ENCODE measurements at regions of chr4 and their contacts with region 1.

Region 1: GRCh38 chr4:10018818-10019461 is 2.4 kb downstream of the SLC2A9 start:
- DNase-seq: peak; percentile 92 to 96 (median 95)
- ATAC-seq: peak; percentile 99
- H3K4me3 ChIP-seq: peak overlapping the region; percentile 75
- H3K4me3 Mint-ChIP-seq: peak overlapping the region; percentile 83 to 96 (median 90)
- H3K27ac ChIP-seq: peak overlapping the region; percentile 81
- H3K27ac Mint-ChIP-seq: peak overlapping the region; percentile 82 to 98 (median 97)
- H3K4me1 ChIP-seq: peaks cover 6 to 10% of the 10 kb centered on the region in 2 donors
- H3K4me1 Mint-ChIP-seq: peaks cover 8 to 25% (median 13%) of the 10 kb centered on the region in 7 donors
- H3K27me3 ChIP-seq: no peaks in the 10 kb centered on the region
- H3K27me3 Mint-ChIP-seq: peaks cover 0 to under 1% (median 0%) of the 10 kb centered on the region in 5 donors

Region 2: GRCh38 chr4:9691238-9692065 is 327.5 kb before region 1 on chr4:
- CTCF ChIA-PET with region 1: no interaction called
- POLR2A ChIA-PET with region 1: no interaction called
- intact Hi-C with region 1: loop called (anchors 1 kb)
- DNase-seq: peak; percentile 80 to 88 (median 86)
- ATAC-seq: peak; percentile 100
- H3K4me3 ChIP-seq: peak overlapping the region; percentile 61
- H3K4me3 Mint-ChIP-seq: peak overlapping the region; percentile 65 to 92 (median 86)
- H3K27ac ChIP-seq: peak overlapping the region; percentile 77
- H3K27ac Mint-ChIP-seq: peak overlapping the region; percentile 79 to 91 (median 83)
- H3K4me1 ChIP-seq: no peaks in the 10 kb centered on the region
- H3K4me1 Mint-ChIP-seq: peaks cover 9 to 26% (median 24%) of the 10 kb centered on the region in 7 donors
- H3K27me3 ChIP-seq: no peaks in the 10 kb centered on the region
- H3K27me3 Mint-ChIP-seq: peaks cover 0 to 9% (median 0%) of the 10 kb centered on the region in 5 donors

Region 3: DNA sequence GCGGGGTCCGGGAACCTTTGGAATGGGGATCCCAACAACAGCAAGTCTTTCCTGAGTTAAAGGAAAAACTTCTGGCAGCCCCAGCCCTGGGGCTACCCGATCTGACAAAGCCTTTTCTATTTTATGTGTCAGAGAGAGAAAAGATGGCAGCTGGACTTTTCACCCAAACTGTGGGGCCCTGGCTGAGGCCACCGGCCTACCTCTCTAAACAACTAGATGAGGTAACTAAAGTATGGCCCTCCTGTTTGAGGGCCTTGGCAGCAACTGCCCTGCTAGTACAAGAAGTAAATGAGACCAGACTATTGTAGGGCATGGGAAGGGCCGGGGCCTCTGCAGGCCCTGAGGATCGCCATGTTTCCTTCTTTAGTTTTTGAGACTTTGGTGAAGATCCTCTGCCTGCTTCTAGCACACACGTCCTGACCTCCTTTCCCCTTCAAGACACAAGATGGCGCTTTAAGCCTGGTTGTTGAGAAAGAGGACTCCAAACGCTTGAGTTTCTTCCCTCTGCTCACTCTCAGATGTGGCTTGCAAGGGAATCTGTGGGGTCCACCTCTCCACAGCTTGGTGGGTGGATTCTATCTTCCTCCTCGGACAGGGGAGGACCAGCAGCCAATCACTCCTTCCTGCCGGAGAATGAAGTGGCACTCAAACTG is 256.0 kb before region 1 on chr4:
- CTCF ChIA-PET with region 1: interaction called, 3 read pairs
- POLR2A ChIA-PET with region 1: no interaction called
- intact Hi-C with region 1: loop called (anchors 1 kb)
- DNase-seq: peak in 8 of 9 donors; percentile 5 to 56 (median 34)
- ATAC-seq: no peak
- H3K4me3 ChIP-seq: no peak overlapping the region
- H3K4me3 Mint-ChIP-seq: no peak overlapping the region
- H3K27ac ChIP-seq: no peak overlapping the region
- H3K27ac Mint-ChIP-seq: no peak overlapping the region
- H3K4me1 ChIP-seq: no peaks in the 10 kb centered on the region
- H3K4me1 Mint-ChIP-seq: no peaks in the 10 kb centered on the region
- H3K27me3 ChIP-seq: no peaks in the 10 kb centered on the region
- H3K27me3 Mint-ChIP-seq: peaks cover 11 to 35% (median 26%) of the 10 kb centered on the region in 5 donors

Region 4: DNA sequence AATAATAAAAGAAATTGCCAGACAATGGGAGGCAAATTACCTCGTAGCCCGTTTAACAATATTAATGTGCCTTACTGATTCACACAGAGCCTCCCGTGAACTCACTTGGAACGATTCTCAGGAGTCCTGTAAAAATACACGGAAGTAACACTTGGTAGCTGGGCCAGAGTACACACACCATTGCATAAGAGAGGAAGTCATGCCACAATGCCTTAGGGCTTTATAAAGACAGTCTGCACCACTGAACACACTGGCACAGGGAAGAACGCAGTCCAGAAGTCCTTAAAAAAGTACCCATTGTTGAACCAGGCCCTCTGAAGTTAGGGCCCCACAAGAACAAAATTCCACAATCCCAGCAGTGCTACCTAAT is 12.7 kb before region 1 on chr4:
- CTCF ChIA-PET with region 1: no interaction called
- POLR2A ChIA-PET with region 1: no interaction called
- intact Hi-C with region 1: no loop called
- DNase-seq: no peak
- ATAC-seq: peak; percentile 82
- H3K4me3 ChIP-seq: no peak overlapping the region
- H3K4me3 Mint-ChIP-seq: no peak overlapping the region
- H3K27ac ChIP-seq: no peak overlapping the region
- H3K27ac Mint-ChIP-seq: no peak overlapping the region
- H3K4me1 ChIP-seq: no peaks in the 10 kb centered on the region
- H3K4me1 Mint-ChIP-seq: peaks cover 0 to 45% (median 0%) of the 10 kb centered on the region in 7 donors
- H3K27me3 ChIP-seq: no peaks in the 10 kb centered on the region
- H3K27me3 Mint-ChIP-seq: no peaks in the 10 kb centered on the region

Region 5: GRCh38 chr4:10074767-10075105 is 55.8 kb after region 1 on chr4:
- CTCF ChIA-PET with region 1: no interaction called
- POLR2A ChIA-PET with region 1: no interaction called
- intact Hi-C with region 1: loop called in 1 of 2 experiments (anchors 5 kb)
- DNase-seq: no peak
- ATAC-seq: peak; percentile 37
- H3K4me3 ChIP-seq: no peak overlapping the region
- H3K4me3 Mint-ChIP-seq: no peak overlapping the region
- H3K27ac ChIP-seq: no peak overlapping the region
- H3K27ac Mint-ChIP-seq: peak overlapping the region in 5 of 9 donors; percentile 13 to 74 (median 33)
- H3K4me1 ChIP-seq: peaks cover 0 to 2% of the 10 kb centered on the region in 2 donors
- H3K4me1 Mint-ChIP-seq: peaks cover 0 to 8% (median 0%) of the 10 kb centered on the region in 7 donors
- H3K27me3 ChIP-seq: no peaks in the 10 kb centered on the region
- H3K27me3 Mint-ChIP-seq: no peaks in the 10 kb centered on the region

Region 6: GRCh38 chr4:10157478-10158332 is 138.8 kb after region 1 on chr4:
- CTCF ChIA-PET with region 1: no interaction called
- POLR2A ChIA-PET with region 1: no interaction called
- intact Hi-C with region 1: loop called (anchors 1 to 2 kb)
- DNase-seq: peak in 7 of 9 donors; percentile 4 to 37 (median 32)
- ATAC-seq: peak; percentile 63
- H3K4me3 ChIP-seq: no peak overlapping the region
- H3K4me3 Mint-ChIP-seq: peak overlapping the region in 5 of 10 donors; percentile 19 to 48 (median 25)
- H3K27ac ChIP-seq: no peak overlapping the region
- H3K27ac Mint-ChIP-seq: peak overlapping the region in 7 of 9 donors; percentile 12 to 86 (median 60)
- H3K4me1 ChIP-seq: peaks cover 8 to 39% of the 10 kb centered on the region in 2 donors
- H3K4me1 Mint-ChIP-seq: peaks cover 14 to 57% (median 50%) of the 10 kb centered on the region in 7 donors
- H3K27me3 ChIP-seq: no peaks in the 10 kb centered on the region
- H3K27me3 Mint-ChIP-seq: no peaks in the 10 kb centered on the region

Region 7: DNA sequence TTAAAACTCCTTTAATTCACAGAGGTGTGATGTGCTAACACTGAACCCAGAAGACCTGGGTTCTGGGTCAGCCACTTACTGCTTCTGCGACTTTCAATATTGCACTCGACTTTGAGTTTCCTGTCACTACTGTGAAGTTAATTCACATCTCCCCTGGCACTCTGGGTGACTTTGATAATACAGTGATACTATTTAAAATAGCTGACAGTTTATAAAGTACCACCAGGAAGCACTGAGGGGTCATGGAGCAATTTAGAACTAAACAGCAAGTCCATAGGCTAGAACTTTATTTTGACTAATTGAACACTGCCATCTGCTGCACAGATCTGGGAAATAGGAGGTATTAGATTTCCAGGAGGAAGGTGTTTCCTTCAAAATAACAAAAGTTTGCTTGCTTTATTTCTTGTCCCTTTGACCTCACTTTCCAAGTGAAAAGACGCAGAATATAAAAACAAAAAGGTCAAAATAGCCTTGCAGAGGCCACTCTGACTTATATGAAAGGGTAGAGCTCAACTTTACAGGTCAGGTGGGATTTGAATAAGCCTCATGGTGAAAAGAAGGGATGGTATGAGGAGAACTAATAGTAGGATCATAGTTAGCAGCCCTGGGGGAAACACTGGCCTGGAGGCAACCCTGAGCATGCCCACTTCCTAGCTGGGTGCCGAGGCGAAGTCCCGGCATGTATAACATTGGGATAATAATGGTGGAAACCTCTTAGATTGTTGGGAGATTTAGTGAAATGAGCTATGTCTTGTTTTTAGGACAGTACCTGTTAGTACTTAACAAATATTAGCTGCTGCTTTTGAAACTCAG is 384.9 kb after region 1 on chr4:
- CTCF ChIA-PET with region 1: interaction called, 5 read pairs
- POLR2A ChIA-PET with region 1: no interaction called
- intact Hi-C with region 1: loop called in 1 of 2 experiments (anchors 1 kb)
- DNase-seq: peak in 5 of 9 donors; percentile 20 to 44 (median 34)
- ATAC-seq: peak; percentile 54
- H3K4me3 ChIP-seq: no peak overlapping the region
- H3K4me3 Mint-ChIP-seq: no peak overlapping the region
- H3K27ac ChIP-seq: no peak overlapping the region
- H3K27ac Mint-ChIP-seq: no peak overlapping the region
- H3K4me1 ChIP-seq: no peaks in the 10 kb centered on the region
- H3K4me1 Mint-ChIP-seq: no peaks in the 10 kb centered on the region
- H3K27me3 ChIP-seq: no peaks in the 10 kb centered on the region
- H3K27me3 Mint-ChIP-seq: no peaks in the 10 kb centered on the region

Region 8: DNA sequence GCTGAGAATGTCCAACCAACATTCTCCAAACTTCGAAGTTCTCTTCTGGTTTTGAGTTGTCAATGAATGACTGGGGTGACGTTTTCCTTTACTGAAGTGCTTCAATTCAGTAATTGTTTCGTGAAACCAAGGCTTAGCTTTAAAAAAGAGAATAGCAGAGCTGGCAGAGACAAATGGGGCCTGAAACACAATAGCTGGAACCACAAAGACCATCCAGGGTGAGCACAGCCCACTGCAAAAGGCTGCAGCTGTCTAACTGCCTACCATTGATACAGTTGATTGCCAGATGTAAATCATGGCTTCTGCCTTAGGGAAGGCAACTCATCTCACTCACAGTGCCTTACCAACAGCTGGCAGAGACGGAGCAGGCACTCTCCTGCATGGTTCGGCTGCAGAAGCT is 517.0 kb after region 1 on chr4:
- CTCF ChIA-PET with region 1: no interaction called
- POLR2A ChIA-PET with region 1: no interaction called
- intact Hi-C with region 1: loop called (anchors 1 to 2 kb)
- DNase-seq: no peak
- ATAC-seq: no peak
- H3K4me3 ChIP-seq: no peak overlapping the region
- H3K4me3 Mint-ChIP-seq: no peak overlapping the region
- H3K27ac ChIP-seq: no peak overlapping the region
- H3K27ac Mint-ChIP-seq: no peak overlapping the region
- H3K4me1 ChIP-seq: no peaks in the 10 kb centered on the region
- H3K4me1 Mint-ChIP-seq: no peaks in the 10 kb centered on the region
- H3K27me3 ChIP-seq: no peaks in the 10 kb centered on the region
- H3K27me3 Mint-ChIP-seq: peaks cover 0 to 7% (median 4%) of the 10 kb centered on the region in 5 donors